Colonic mucosa (tissue), 4 donors: ENCODE measurements at regions of chr16 and their contacts with region 1.

Region 1: GRCh38 chr16:3129137-3130131 is 5.4 kb upstream of the ZNF213 start:
- DNase-seq: peak; percentile 85
- H3K4me3 ChIP-seq: peak overlapping the region; percentile 54
- H3K27ac ChIP-seq: peak overlapping the region; percentile 82
- H3K4me1 ChIP-seq: peaks cover 21% of the 10 kb centered on the region
- H3K27me3 ChIP-seq: no peaks in the 10 kb centered on the region
- CTCF ChIP-seq: peak; percentile 93

Region 2: GRCh38 chr16:3059000-3059722 is 70.3 kb before region 1 on chr16:
- intact Hi-C with region 1: loop called (anchors 5 kb)
- DNase-seq: peak; percentile 92
- H3K4me3 ChIP-seq: peak overlapping the region; percentile 89
- H3K27ac ChIP-seq: peak overlapping the region; percentile 81
- H3K4me1 ChIP-seq: peaks cover 12% of the 10 kb centered on the region
- H3K27me3 ChIP-seq: no peaks in the 10 kb centered on the region
- CTCF ChIP-seq: peak; percentile 95

Region 3: GRCh38 chr16:3112058-3112880 is 17.2 kb before region 1 on chr16 and contains the start of gene ZNF205:
- intact Hi-C with region 1: loop called (anchors 2 kb)
- DNase-seq: peak; percentile 88
- H3K4me3 ChIP-seq: peak within 1 kb of the TSS; percentile 67
- H3K27ac ChIP-seq: peak within 1 kb of the TSS; percentile 11
- H3K4me1 ChIP-seq: no peaks in the 10 kb centered on the region
- H3K27me3 ChIP-seq: no peaks in the 10 kb centered on the region
- CTCF ChIP-seq: no peak
- total RNA-seq, gene ZNF205: 9.9 to 10.5 TPM

Region 4: GRCh38 chr16:3377917-3378316 is 248.5 kb after region 1 on chr16:
- intact Hi-C with region 1: no loop called
- DNase-seq: no peak
- H3K4me3 ChIP-seq: no peak overlapping the region
- H3K27ac ChIP-seq: no peak overlapping the region
- H3K4me1 ChIP-seq: no peaks in the 10 kb centered on the region
- H3K27me3 ChIP-seq: no peaks in the 10 kb centered on the region
- CTCF ChIP-seq: no peak